Calu3 (cell line): ENCODE measurements at regions of chr1 and their contacts with region 1.

Region 1: GRCh38 chr1:224317383-224318024 is 12.5 kb downstream of the NVL start:
- DNase-seq: no peak
- H3K4me3 Mint-ChIP-seq: no peak overlapping the region
- H3K27ac Mint-ChIP-seq: no peak overlapping the region
- H3K4me1 Mint-ChIP-seq: no peaks in the 10 kb centered on the region
- H3K27me3 Mint-ChIP-seq: no peaks in the 10 kb centered on the region
- CTCF ChIP-seq: no peak

Region 2: DNA sequence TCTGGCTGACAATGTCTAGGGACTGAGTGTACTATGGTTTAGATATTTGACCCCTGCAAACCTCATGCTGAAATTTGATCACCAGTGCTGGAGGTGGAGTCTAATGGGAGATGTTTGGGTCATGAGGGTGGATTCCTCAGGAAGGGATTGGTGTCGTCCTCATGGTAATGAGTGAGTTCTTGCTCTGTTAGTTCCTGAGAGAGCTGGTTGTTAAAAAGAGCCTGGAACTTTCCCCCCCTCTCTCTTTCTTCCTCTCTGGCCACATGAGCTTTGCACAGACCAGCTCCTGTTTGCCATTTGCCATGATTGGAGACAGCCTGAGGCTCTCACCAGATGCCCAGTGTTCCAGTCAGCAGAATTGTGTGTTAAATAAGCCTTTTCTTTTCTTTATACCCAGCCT is 262.0 kb after region 1 on chr1:
- CTCF ChIA-PET with region 1: no interaction called
- intact Hi-C with region 1: no loop called
- DNase-seq: no peak
- H3K4me3 Mint-ChIP-seq: no peak overlapping the region
- H3K27ac Mint-ChIP-seq: no peak overlapping the region
- H3K4me1 Mint-ChIP-seq: peaks cover 26% of the 10 kb centered on the region
- H3K27me3 Mint-ChIP-seq: no peaks in the 10 kb centered on the region
- CTCF ChIP-seq: no peak

Region 3: GRCh38 chr1:226157761-226158316 is 1840.3 kb after region 1 on chr1:
- CTCF ChIA-PET with region 1: interaction called, 11 read pairs
- intact Hi-C with region 1: no loop called
- DNase-seq: no peak
- H3K4me3 Mint-ChIP-seq: no peak overlapping the region
- H3K27ac Mint-ChIP-seq: no peak overlapping the region
- H3K4me1 Mint-ChIP-seq: no peaks in the 10 kb centered on the region
- H3K27me3 Mint-ChIP-seq: no peaks in the 10 kb centered on the region
- CTCF ChIP-seq: no peak